ENCODE measurements at regions of chr14 and their contacts with region 1.

Region 1: DNA sequence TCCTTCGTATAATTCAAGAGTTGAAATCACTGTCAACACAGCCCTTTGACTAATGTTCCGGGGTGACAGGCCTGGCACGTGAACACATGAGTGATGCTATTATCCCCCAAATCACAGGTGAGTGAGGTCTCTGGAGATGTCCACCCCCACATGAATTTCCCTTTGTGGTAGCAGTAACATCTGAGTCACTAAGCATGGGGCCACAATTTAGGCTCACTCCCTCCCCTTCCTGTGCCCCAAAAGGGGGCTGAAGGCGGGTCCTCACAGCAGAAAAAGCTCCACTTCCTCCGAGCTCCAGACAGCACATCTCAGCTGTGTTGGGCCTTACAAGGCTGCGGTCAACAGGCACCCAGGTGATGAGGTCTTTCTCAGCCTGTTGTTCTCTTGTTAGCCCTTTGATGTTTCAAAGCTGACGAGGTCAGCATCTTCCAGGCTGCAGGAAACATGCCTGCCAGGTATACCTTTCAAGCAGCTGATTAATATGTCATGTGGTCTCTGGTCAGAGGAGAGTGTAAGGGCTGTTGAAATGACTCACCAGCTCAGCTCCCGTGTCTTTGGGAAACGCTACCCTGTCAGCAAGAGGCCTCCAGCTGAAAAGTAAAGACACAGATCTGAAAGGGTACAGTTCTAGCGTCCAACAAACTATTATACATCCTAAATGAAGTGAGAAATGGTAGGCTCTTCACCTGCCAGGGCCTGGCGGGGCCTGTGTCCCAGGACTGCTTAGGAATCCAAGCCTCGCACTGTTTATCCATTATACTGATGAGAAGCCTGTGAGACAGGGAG is 107.3 kb downstream of the ZFP36L1 start:
- DNase-seq: peak; percentile 80
- H3K4me3 Mint-ChIP-seq: peak overlapping the region; percentile 26
- H3K27ac Mint-ChIP-seq: peak overlapping the region; percentile 88
- H3K4me1 Mint-ChIP-seq: peaks cover 58% of the 10 kb centered on the region
- H3K27me3 Mint-ChIP-seq: no peaks in the 10 kb centered on the region

Region 2: DNA sequence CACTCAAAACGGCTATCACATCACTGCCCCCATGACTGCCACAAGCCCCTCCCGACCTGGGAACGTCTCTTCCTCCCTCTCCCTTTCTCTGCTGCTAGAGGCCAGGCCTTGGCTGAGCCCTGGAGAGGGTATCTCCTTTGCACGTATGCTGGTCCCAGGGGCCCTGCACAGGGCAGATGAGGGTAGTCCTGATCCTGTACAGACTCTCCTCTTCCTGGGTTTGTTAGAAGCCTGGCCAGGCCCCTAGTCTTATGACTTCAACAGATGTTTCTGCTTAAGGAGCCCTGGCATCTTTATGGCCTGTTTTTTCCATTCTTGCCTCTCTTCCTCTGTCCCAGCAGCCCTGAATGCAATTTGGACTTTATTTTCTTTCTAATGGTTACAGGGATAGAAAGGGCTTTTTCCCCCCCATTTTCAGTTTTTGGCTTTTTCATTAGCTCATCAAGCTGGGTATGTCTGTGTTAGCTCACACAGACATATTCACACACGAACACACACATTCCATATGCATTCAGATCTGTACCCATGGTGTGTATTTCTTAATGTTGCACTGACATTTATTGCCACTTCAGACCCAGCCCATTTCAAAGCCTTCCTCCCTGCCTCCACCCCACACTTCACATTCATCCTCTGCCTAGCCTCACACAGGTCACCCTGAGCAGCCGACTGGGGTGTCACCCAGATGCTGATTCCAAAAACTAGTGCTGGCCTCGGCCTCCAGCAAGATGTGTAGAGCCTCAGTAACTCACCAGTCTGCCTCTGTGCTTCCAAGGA is 96.0 kb before region 1 on chr14:
- CTCF ChIA-PET with region 1: no interaction called
- POLR2A ChIA-PET with region 1: no interaction called
- DNase-seq: no peak
- H3K4me3 Mint-ChIP-seq: no peak overlapping the region
- H3K27ac Mint-ChIP-seq: no peak overlapping the region
- H3K4me1 Mint-ChIP-seq: peaks cover 12% of the 10 kb centered on the region
- H3K27me3 Mint-ChIP-seq: no peaks in the 10 kb centered on the region

Region 3: GRCh38 chr14:68948686-68949600 is 263.3 kb after region 1 on chr14:
- CTCF ChIA-PET with region 1: no interaction called
- POLR2A ChIA-PET with region 1: interaction called, 10 read pairs
- DNase-seq: no peak
- H3K4me3 Mint-ChIP-seq: no peak overlapping the region
- H3K27ac Mint-ChIP-seq: peak overlapping the region; percentile 33
- H3K4me1 Mint-ChIP-seq: peaks cover 37% of the 10 kb centered on the region
- H3K27me3 Mint-ChIP-seq: no peaks in the 10 kb centered on the region